Activated CD4-positive, alpha-beta memory T cell treated with anti-CD3 and anti-CD28 coated beads for 36 hours (primary cell): ENCODE measurements at regions of chr15 and their contacts with region 1.

Region 1: GRCh38 chr15:68304589-68305337 is 27.2 kb downstream of the FEM1B start:
- DNase-seq: no peak
- H3K4me3 Mint-ChIP-seq: no peak overlapping the region
- H3K27ac Mint-ChIP-seq: no peak overlapping the region
- H3K4me1 Mint-ChIP-seq: peaks cover 7% of the 10 kb centered on the region
- H3K27me3 Mint-ChIP-seq: peaks cover 3% of the 10 kb centered on the region

Region 2: DNA sequence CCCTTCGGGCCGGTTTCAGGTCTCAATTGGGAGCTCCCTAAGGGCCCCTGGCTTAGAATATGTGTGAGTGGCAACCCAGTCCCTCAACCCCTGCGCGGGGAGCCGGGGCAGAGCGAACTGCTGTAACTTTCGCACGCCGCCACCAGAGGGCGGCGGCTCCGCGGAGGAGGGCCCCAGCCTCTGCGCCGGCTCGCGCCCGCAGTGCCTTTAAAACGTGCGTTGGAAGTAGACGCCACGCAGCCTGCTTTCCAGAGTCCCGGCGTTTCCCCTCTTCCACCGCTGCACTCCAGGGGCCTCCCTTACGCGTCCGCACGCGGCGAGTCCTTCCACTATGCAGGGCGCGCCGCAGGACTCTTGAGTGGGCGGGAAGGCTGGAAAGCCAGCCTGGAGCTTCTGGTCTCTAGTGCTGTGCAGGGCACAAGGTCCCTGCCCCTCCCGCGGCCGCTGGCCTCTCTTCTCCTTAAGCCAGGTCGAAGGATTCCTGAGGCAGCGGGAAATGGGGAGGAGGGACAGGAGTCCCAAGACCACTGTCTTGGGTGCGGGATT is 441.2 kb before region 1 on chr15:
- CTCF ChIA-PET with region 1: interaction called, 5 read pairs
- POLR2A ChIA-PET with region 1: no interaction called
- intact Hi-C with region 1: loop called (anchors 5 kb)
- DNase-seq: peak; percentile 79
- H3K4me3 Mint-ChIP-seq: peak overlapping the region; percentile 45
- H3K27ac Mint-ChIP-seq: no peak overlapping the region
- H3K4me1 Mint-ChIP-seq: peaks cover 3% of the 10 kb centered on the region
- H3K27me3 Mint-ChIP-seq: peaks cover 11% of the 10 kb centered on the region

Region 3: GRCh38 chr15:67945951-67946700 is 358.6 kb before region 1 on chr15:
- CTCF ChIA-PET with region 1: no interaction called
- POLR2A ChIA-PET with region 1: no interaction called
- intact Hi-C with region 1: no loop called
- DNase-seq: no peak
- H3K4me3 Mint-ChIP-seq: no peak overlapping the region
- H3K27ac Mint-ChIP-seq: no peak overlapping the region
- H3K4me1 Mint-ChIP-seq: peaks cover 6% of the 10 kb centered on the region
- H3K27me3 Mint-ChIP-seq: peaks cover 5% of the 10 kb centered on the region

Region 4: GRCh38 chr15:68130851-68131250 is 173.9 kb before region 1 on chr15:
- CTCF ChIA-PET with region 1: no interaction called
- POLR2A ChIA-PET with region 1: no interaction called
- intact Hi-C with region 1: no loop called
- DNase-seq: no peak
- H3K4me3 Mint-ChIP-seq: no peak overlapping the region
- H3K27ac Mint-ChIP-seq: no peak overlapping the region
- H3K4me1 Mint-ChIP-seq: peaks cover 5% of the 10 kb centered on the region
- H3K27me3 Mint-ChIP-seq: no peaks in the 10 kb centered on the region

Region 5: GRCh38 chr15:68277603-68278344 is 27.0 kb before region 1 on chr15 and contains the start of gene FEM1B:
- CTCF ChIA-PET with region 1: interaction called, 19 read pairs
- POLR2A ChIA-PET with region 1: no interaction called
- intact Hi-C with region 1: loop called (anchors 2 kb)
- DNase-seq: peak; percentile 92
- H3K4me3 Mint-ChIP-seq: peak within 1 kb of the TSS; percentile 90
- H3K27ac Mint-ChIP-seq: peak within 1 kb of the TSS; percentile 97
- H3K4me1 Mint-ChIP-seq: peaks cover 52% of the 10 kb centered on the region
- H3K27me3 Mint-ChIP-seq: no peaks in the 10 kb centered on the region
- total RNA-seq, gene FEM1B: 32.6 to 34.2 TPM

Region 6: DNA sequence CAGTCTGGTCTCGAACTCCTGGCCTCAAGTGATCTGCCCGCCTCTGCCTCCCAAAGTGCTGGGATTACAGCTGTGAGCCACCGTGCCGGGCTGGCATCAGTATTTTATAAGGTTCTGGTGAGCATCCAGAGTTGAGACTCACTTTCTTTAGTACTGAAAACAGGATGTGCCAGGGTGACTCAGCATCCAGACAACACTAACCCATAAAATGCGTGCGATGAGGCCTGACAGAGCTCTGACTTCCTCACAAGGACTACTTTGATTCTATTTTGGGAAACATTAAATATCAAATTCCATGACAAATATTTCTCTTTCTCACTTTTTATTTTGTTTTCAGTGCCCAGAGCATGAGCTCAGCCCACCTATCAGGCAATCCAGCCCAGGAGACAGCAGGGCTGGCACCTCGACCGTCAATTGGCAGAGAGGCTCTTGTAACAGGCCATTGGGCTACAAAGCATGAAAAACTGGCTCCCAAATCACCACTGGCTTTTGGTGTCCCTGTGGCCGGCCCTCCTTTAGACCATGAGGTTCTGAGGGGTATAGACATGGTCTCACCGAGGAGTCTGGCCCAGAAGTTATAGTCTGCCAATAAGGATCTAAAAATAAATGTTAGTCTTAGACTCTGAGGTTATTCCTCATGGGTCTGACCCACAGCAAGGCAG is 47.8 kb after region 1 on chr15:
- CTCF ChIA-PET with region 1: no interaction called
- POLR2A ChIA-PET with region 1: no interaction called
- intact Hi-C with region 1: no loop called
- DNase-seq: peak; percentile 49
- H3K4me3 Mint-ChIP-seq: no peak overlapping the region
- H3K27ac Mint-ChIP-seq: peak overlapping the region; percentile 55
- H3K4me1 Mint-ChIP-seq: peaks cover 6% of the 10 kb centered on the region
- H3K27me3 Mint-ChIP-seq: no peaks in the 10 kb centered on the region

Region 7: DNA sequence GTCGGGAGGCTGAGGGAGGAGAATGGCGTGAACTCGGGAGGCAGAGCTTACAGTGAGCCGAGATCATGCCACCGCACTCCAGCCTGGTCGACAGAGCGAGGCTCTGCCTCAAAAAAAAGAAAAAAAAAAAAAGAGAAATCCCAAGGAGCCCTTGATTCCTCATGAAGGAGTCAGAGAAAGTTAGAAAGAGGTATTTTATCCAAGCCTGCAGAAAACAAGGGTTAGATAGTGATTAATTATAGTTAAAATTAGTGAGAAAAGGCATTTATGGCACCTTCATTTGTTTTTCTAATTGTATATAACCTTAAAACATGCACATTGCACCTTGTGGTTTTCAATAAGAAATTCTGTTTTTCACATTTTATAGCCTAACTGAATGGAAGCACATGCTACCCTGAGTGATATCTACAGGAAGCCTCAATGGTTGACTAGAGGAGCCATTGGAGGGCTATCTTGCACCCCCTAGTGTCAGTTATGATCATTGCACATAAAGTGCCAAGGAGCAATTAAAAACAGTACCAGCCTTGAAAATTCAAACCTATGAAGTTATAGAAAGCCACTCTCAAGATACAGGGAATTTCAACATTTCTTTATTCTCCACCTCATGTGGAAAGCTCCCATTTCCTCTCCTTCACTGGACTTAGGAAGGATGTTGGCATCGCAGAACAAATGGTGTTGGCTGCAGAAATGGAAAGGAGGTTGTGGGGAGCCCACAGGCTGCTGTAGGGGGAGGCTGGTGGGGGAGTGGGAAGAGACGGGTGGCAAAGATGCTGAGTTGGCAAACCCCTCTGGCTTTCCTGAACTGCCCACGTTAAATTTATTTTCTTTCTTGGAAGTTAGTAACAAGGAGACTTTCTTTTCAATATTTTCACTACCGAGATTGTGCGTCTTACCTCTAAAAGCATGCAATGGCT is 78.7 kb after region 1 on chr15:
- CTCF ChIA-PET with region 1: interaction called, 50 read pairs
- POLR2A ChIA-PET with region 1: no interaction called
- intact Hi-C with region 1: loop called (anchors 1 kb)
- DNase-seq: peak; percentile 42
- H3K4me3 Mint-ChIP-seq: no peak overlapping the region
- H3K27ac Mint-ChIP-seq: no peak overlapping the region
- H3K4me1 Mint-ChIP-seq: peaks cover 9% of the 10 kb centered on the region
- H3K27me3 Mint-ChIP-seq: no peaks in the 10 kb centered on the region

Region 8: DNA sequence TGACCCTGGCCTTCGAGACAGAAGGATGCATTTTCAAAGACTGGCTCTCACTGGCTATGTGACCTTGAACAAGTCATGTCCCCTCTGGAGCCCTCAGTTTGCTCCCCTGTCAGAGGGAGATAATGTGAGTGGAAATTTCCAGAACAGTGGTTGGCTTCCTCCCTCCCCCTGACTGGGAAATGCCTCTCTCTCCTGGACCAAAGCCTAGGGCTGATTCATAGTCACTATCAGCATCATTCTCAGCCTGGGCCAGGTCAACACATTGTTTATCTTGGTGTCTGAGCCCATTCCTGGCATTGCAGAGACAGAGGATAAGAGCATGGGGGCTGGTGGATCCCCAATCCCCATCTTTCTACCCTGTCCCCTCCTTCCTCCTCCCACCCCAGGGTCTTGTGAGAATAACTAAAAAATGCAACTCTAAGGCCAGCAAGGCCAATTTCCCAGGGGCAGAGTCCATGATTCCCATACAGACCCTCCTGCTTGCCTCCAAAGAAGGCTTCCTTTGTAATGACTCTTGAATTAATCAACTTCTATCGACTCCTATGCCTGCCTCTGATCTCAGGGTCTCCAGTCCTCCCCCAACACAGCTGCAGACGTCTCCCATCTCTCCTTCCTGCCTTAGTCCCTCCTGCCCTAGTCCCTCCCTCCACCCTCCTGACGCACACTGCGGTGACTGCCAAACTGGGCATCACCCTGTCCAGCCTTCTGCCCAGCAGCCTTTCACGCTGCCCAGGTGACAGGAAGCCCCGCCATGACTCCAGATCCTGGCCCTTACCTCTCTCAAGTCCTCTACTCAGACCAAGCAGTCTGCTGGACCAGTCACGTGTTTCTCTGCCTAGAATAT is 238.6 kb after region 1 on chr15:
- CTCF ChIA-PET with region 1: interaction called, 13 read pairs
- POLR2A ChIA-PET with region 1: no interaction called
- intact Hi-C with region 1: loop called (anchors 1 kb)
- DNase-seq: no peak
- H3K4me3 Mint-ChIP-seq: no peak overlapping the region
- H3K27ac Mint-ChIP-seq: no peak overlapping the region
- H3K4me1 Mint-ChIP-seq: peaks cover 3% of the 10 kb centered on the region
- H3K27me3 Mint-ChIP-seq: peaks cover 33% of the 10 kb centered on the region

Region 9: DNA sequence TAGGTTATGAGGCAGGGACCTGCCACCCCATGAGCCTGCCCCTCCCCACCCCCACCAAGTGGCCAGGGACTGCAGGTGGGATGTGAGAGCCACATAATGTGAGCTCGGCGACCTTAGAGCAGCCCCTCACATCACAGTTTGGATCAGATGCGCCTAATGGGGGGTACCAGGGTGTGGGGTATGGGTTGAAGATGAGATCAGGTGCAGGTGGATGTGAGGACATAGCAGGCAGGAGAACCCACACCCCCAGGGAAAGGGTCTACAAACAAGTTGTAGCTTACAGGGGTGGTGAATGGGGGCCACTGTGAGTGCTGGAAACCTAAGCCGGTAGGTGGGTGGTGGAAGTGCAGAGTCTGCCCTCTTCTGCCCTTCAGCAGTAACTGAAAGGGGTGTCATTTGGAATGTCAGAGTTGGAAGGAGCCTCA is 368.0 kb after region 1 on chr15:
- CTCF ChIA-PET with region 1: interaction called, 6 read pairs
- POLR2A ChIA-PET with region 1: no interaction called
- intact Hi-C with region 1: loop called (anchors 1 kb)
- DNase-seq: no peak
- H3K4me3 Mint-ChIP-seq: no peak overlapping the region
- H3K27ac Mint-ChIP-seq: no peak overlapping the region
- H3K4me1 Mint-ChIP-seq: peaks cover 2% of the 10 kb centered on the region
- H3K27me3 Mint-ChIP-seq: peaks cover 16% of the 10 kb centered on the region